ENCODE measurements at regions of chr17 and their contacts with region 1.

Region 1: GRCh38 chr17:73546770-73547536 is 97.3 kb downstream of the SDK2 start:
- DNase-seq: peak; percentile 76
- ATAC-seq: peak; percentile 98
- H3K4me3 ChIP-seq: no peak overlapping the region
- H3K4me3 Mint-ChIP-seq: no peak overlapping the region
- H3K27ac ChIP-seq: no peak overlapping the region
- H3K27ac Mint-ChIP-seq: peak overlapping the region; percentile 67
- H3K4me1 ChIP-seq: peaks cover 11 to 31% of the 10 kb centered on the region in 2 donors
- H3K4me1 Mint-ChIP-seq: peaks cover 39% of the 10 kb centered on the region
- H3K27me3 ChIP-seq: no peaks in the 10 kb centered on the region
- H3K27me3 Mint-ChIP-seq: no peaks in the 10 kb centered on the region
- CTCF ChIP-seq: no peak

Region 2: DNA sequence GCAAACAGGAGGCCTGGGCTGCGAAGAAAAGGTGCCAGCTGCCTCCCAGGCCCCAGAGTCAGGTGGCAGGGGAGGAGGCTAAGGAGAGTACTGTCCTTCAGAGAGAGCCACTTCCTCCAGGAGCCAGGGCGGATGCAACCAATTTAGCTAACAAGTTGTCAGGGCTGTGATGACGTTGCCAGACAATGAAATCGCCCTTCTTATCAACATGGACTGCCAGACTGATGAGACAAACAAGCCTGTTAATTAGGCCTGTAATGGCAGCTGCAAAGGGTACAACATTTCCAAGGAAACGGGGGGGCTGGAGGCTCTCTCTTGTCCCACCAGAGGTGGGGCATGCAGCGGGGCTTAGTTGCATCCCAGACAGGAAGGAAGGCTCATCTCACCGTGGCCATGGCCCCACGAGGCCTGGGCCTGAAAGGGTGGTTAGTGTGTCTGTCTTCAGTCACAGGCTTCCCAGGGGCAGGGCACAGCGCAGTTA is 14.5 kb before region 1 on chr17:
- CTCF ChIA-PET with region 1: no interaction called
- POLR2A ChIA-PET with region 1: no interaction called
- intact Hi-C with region 1: no loop called
- DNase-seq: no peak
- ATAC-seq: no peak
- H3K4me3 ChIP-seq: no peak overlapping the region
- H3K4me3 Mint-ChIP-seq: no peak overlapping the region
- H3K27ac ChIP-seq: no peak overlapping the region
- H3K27ac Mint-ChIP-seq: no peak overlapping the region
- H3K4me1 ChIP-seq: no peaks in the 10 kb centered on the region
- H3K4me1 Mint-ChIP-seq: peaks cover 8% of the 10 kb centered on the region
- H3K27me3 ChIP-seq: no peaks in the 10 kb centered on the region
- H3K27me3 Mint-ChIP-seq: no peaks in the 10 kb centered on the region
- CTCF ChIP-seq: no peak

Region 3: DNA sequence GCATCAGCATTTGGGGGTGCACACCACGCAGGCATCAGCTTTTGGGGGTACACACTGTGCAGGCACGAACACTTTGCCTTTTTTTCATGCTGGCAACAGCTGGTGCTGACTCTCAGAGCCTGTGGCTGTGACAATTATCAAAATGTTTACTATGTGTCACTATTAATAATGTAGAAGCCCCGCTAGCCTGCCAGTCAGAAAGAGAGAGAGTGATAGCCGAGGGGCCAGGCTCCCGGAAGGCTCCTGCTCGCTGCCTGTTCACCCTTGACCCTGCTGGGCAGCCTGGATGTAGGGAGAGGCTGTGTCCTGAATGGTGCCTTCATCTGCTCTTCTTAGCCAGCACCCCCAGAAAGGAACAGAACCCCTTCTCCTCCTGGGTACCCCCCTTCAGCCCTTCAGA is 35.4 kb after region 1 on chr17:
- CTCF ChIA-PET with region 1: no interaction called
- POLR2A ChIA-PET with region 1: no interaction called
- intact Hi-C with region 1: no loop called
- DNase-seq: no peak
- ATAC-seq: no peak
- H3K4me3 ChIP-seq: no peak overlapping the region
- H3K4me3 Mint-ChIP-seq: no peak overlapping the region
- H3K27ac ChIP-seq: no peak overlapping the region
- H3K27ac Mint-ChIP-seq: peak overlapping the region; percentile 50
- H3K4me1 ChIP-seq: peaks cover 36 to 42% of the 10 kb centered on the region in 2 donors
- H3K4me1 Mint-ChIP-seq: peaks cover 58% of the 10 kb centered on the region
- H3K27me3 ChIP-seq: no peaks in the 10 kb centered on the region
- H3K27me3 Mint-ChIP-seq: no peaks in the 10 kb centered on the region
- CTCF ChIP-seq: no peak

Region 4: DNA sequence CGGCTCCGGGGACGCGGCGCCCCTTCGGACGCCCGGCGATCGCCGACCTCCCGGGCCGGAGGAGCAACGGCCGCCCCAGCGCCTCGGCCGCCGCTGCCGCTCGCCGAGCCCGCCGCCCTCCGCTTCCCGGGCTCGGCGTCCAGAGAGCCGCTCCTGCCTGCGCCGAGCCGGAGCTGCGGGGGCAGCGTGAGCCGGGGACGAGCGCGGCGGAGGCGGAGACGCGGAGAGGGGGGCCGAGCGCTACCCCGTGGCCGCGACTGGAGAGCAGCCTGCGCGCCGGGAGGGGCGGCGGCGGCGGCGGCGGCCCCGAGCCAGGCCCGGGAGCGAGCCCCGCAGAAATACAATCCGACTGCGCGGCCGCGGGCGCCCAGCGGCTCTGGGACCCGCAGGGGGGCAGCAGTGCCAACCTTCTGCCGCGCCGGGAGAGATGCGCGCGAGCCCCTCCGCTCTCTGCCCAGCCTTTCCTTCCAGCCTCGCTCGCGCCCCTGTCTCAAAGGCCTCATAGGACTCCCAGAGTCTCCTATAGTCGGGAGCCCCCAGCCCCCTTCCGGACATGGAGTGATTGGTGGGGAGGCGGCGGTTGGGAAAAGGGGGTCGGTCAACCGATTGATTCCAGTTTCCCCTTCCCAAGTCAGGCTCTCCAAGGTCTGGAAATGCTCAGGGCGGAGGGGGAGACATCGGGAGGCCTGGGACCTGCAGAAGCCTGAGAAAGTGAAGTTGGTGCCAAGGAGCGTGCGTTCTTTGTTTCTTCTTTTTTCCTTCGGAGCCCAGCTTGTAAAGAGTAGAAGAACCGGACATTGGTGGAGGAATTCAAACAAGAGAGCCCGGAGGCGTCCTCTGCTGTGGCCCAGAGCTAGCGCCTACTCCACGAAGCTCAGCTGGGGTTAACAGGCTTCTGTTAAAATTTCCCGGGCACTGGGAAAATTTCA is 98.4 kb after region 1 on chr17:
- CTCF ChIA-PET with region 1: interaction called, 4 read pairs
- POLR2A ChIA-PET with region 1: no interaction called
- intact Hi-C with region 1: loop called (anchors 5 kb)
- DNase-seq: peak; percentile 82
- ATAC-seq: peak; percentile 70
- H3K4me3 ChIP-seq: peak overlapping the region in 3 of 5 experiments; percentile 41 to 72 (median 63)
- H3K4me3 Mint-ChIP-seq: peak overlapping the region; percentile 73
- H3K27ac ChIP-seq: no peak overlapping the region
- H3K27ac Mint-ChIP-seq: peak overlapping the region; percentile 50
- H3K4me1 ChIP-seq: peaks cover 20 to 38% of the 10 kb centered on the region in 2 donors
- H3K4me1 Mint-ChIP-seq: peaks cover 26% of the 10 kb centered on the region
- H3K27me3 ChIP-seq: peaks cover 0 to 23% (median 0%) of the 10 kb centered on the region in 4 experiments
- H3K27me3 Mint-ChIP-seq: peaks cover 4% of the 10 kb centered on the region
- CTCF ChIP-seq: no peak